H1 (cell line): ENCODE measurements at regions of chr12 and their contacts with region 1.

Region 1: GRCh38 chr12:53231826-53232645 is at the start of gene RARG:
- DNase-seq: peak in 1 of 2 experiments; percentile 83
- H3K4me3 ChIP-seq: peak within 1 kb of the TSS; percentile 72 to 79 (median 76)
- H3K27ac ChIP-seq: no peak within 1 kb of the TSS
- H3K4me1 ChIP-seq: peaks cover 35 to 68% (median 46%) of the 10 kb centered on the region in 4 experiments
- H3K27me3 ChIP-seq: no peaks in the 10 kb centered on the region
- CTCF ChIP-seq: no peak
- EP300 ChIP-seq: no peak
- POLR2A ChIP-seq: no peak
- RAD21 ChIP-seq: no peak
- total RNA-seq, gene RARG: 68.6 and 68.9 TPM in 2 replicates

Region 2: DNA sequence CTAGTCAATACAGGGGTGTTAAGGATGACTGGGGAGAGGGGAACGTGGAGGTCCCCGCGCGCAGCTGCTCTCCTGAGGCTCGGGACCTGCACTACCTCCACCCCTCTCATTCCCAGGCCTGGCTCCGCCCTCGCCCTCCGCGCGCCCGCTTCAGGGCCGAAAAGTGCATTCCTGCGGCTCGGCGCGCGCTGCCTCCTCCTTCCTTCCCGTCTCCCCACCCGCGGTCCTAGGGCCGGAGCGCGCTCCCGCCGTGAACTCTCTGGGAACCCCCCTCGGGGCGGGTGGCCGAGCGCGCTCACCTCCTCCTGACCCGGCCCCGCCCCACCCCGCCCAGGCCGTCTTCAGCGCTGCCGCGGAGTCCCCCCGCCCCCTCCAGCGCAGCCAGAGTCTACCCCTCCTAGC is 11.2 kb before region 1 on chr12:
- CTCF ChIA-PET with region 1: interaction called, 535 read pairs
- POLR2A ChIA-PET with region 1: interaction called, 151 read pairs
- DNase-seq: peak in 1 of 2 experiments; percentile 92
- H3K4me3 ChIP-seq: peak overlapping the region; percentile 76 to 97 (median 86)
- H3K27ac ChIP-seq: no peak overlapping the region
- H3K4me1 ChIP-seq: peaks cover 39 to 69% (median 56%) of the 10 kb centered on the region in 4 experiments
- H3K27me3 ChIP-seq: peaks cover 0 to 3% (median 0%) of the 10 kb centered on the region in 4 experiments; a peak in 1 of 7 replicates
- CTCF ChIP-seq: no peak
- EP300 ChIP-seq: no peak
- POLR2A ChIP-seq: no peak
- RAD21 ChIP-seq: no peak

Region 3: DNA sequence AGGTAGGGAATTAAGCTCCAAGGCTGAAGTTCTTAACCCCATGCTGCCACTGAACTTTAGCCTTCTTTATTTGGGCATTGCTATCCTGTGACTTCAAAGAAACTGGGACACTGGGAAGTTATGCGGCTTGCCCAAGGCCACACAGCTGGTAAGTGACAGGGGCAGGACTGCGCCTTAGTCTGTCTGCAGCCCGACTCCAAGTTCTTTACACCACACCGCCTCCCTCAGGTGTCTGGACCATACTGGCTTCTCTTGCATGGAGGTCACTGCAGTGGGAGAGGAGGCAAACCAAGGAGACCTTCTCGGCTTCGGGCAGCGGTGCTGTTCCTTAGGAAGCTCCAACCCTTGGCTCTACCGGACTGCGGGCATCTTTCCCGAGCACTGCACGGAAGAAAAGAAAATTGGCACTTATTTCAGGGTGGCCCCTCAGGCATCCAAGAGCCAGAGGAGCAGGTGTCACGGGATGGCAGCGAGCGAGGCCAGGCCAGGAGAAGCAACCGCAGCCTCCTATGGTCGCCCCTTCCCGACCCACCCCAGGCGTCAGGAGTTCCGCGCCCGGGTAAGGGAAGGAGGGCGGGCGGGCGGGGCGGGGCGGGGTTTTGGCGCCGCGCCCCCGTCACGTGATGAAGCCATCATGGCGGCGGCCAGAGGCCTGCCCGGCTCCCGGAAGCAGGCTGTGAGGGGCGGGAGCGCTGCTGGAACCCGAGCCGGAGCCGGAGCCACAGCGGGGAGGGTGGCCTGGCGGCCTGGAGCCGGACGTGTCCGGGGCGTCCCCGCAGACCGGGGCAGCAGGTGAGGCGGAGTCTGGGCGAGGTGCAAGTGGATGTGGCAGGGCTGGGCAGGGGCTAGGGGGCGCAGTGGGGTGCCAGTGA is 19.7 kb after region 1 on chr12:
- CTCF ChIA-PET with region 1: interaction called, 654 read pairs
- POLR2A ChIA-PET with region 1: interaction called, 7 read pairs
- DNase-seq: peak in 1 of 2 experiments; percentile 86
- H3K4me3 ChIP-seq: peak overlapping the region; percentile 71 to 94 (median 80)
- H3K27ac ChIP-seq: peak overlapping the region; percentile 54; the same call in 1 of the 2 replicates
- H3K4me1 ChIP-seq: peaks cover 0 to 12% (median 3%) of the 10 kb centered on the region in 4 experiments; a peak in 5 of 7 replicates
- H3K27me3 ChIP-seq: no peaks in the 10 kb centered on the region
- CTCF ChIP-seq: peak; percentile 56 to 69 (median 65)
- EP300 ChIP-seq: no peak
- POLR2A ChIP-seq: peak in 1 of 2 experiments; percentile 54; a peak in 1 of 3 replicates
- RAD21 ChIP-seq: peak; percentile 78 to 84

Region 4: GRCh38 chr12:53287741-53288216 is 55.7 kb after region 1 on chr12:
- CTCF ChIA-PET with region 1: interaction called, 12 read pairs
- POLR2A ChIA-PET with region 1: interaction called, 3 read pairs
- DNase-seq: peak in 1 of 2 experiments; percentile 81
- H3K4me3 ChIP-seq: no peak overlapping the region
- H3K27ac ChIP-seq: no peak overlapping the region
- H3K4me1 ChIP-seq: no peaks in the 10 kb centered on the region
- H3K27me3 ChIP-seq: no peaks in the 10 kb centered on the region
- CTCF ChIP-seq: peak; percentile 80 to 86 (median 85)
- EP300 ChIP-seq: no peak
- POLR2A ChIP-seq: no peak
- RAD21 ChIP-seq: peak; percentile 74 to 81